ENCODE measurements at regions of chr13 and their contacts with region 1.

Region 1: DNA sequence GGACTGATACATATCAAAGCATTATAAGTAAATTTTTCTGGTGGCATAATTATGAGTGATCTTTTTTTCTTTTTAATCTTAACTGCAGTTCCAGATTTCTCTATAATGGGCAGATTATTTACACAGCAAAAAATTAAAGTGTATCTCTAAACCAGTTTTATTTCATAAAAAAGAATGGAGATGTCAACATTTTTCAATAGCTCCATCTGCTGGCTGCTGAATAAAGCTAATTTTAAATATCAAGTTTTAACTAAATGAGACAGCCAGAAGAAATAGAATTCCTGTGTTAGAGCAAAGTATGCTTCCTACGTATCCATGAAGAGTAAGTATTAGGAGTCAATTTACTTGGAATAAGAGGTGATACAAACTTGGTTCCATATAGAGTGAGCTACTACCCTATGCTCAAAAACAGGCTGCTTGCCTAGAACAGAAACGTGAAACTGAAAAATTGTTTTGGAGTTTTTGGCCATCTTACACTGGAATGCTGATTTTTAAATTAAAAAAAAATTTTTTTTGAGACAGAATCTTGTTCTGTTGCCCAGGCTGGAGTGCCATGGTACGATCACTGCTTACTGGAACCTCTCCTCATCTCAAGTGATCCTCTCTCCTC is 5.0 kb upstream of the PDS5B start:
- DNase-seq: no peak
- H3K4me3 Mint-ChIP-seq: no peak overlapping the region
- H3K27ac Mint-ChIP-seq: no peak overlapping the region
- H3K4me1 Mint-ChIP-seq: peaks cover 8% of the 10 kb centered on the region
- H3K27me3 Mint-ChIP-seq: no peaks in the 10 kb centered on the region

Region 2: GRCh38 chr13:31154939-31155338 is 1426.3 kb before region 1 on chr13:
- CTCF ChIA-PET with region 1: no interaction called
- POLR2A ChIA-PET with region 1: no interaction called
- intact Hi-C with region 1: no loop called
- DNase-seq: no peak
- H3K4me3 Mint-ChIP-seq: no peak overlapping the region
- H3K27ac Mint-ChIP-seq: no peak overlapping the region
- H3K4me1 Mint-ChIP-seq: peaks cover 30% of the 10 kb centered on the region
- H3K27me3 Mint-ChIP-seq: no peaks in the 10 kb centered on the region

Region 3: DNA sequence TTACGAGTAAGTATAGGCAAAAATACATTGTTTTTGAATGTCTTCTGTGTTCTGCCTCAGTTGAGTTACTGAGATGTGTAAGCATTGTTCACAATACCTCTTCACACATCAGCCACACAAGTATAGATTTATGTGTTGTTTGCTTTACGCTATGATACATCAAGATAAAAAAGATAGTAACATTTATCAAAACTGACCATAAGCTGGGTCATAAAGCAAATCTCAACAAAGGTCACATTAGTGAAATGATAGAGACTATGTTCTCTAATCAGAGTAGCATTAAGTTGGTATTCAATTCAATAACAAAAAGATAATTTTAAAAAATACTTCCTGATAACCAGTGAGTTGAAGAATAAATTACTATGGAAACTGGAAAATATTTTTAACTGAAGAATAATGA is 393.6 kb before region 1 on chr13:
- CTCF ChIA-PET with region 1: no interaction called
- POLR2A ChIA-PET with region 1: no interaction called
- intact Hi-C with region 1: no loop called
- DNase-seq: no peak
- H3K4me3 Mint-ChIP-seq: no peak overlapping the region
- H3K27ac Mint-ChIP-seq: no peak overlapping the region
- H3K4me1 Mint-ChIP-seq: no peaks in the 10 kb centered on the region
- H3K27me3 Mint-ChIP-seq: no peaks in the 10 kb centered on the region

Region 4: GRCh38 chr13:32381539-32381938 is 199.7 kb before region 1 on chr13:
- CTCF ChIA-PET with region 1: interaction called, 26 read pairs
- POLR2A ChIA-PET with region 1: no interaction called
- intact Hi-C with region 1: loop called (anchors 1 kb)
- DNase-seq: peak; percentile 11
- H3K4me3 Mint-ChIP-seq: no peak overlapping the region
- H3K27ac Mint-ChIP-seq: no peak overlapping the region
- H3K4me1 Mint-ChIP-seq: no peaks in the 10 kb centered on the region
- H3K27me3 Mint-ChIP-seq: no peaks in the 10 kb centered on the region

Region 5: GRCh38 chr13:32472194-32472621 is 109.1 kb before region 1 on chr13:
- CTCF ChIA-PET with region 1: interaction called, 34 read pairs
- POLR2A ChIA-PET with region 1: no interaction called
- intact Hi-C with region 1: loop called (anchors 1 kb)
- DNase-seq: no peak
- H3K4me3 Mint-ChIP-seq: no peak overlapping the region
- H3K27ac Mint-ChIP-seq: peak overlapping the region; percentile 84
- H3K4me1 Mint-ChIP-seq: peaks cover 18% of the 10 kb centered on the region
- H3K27me3 Mint-ChIP-seq: no peaks in the 10 kb centered on the region

Region 6: GRCh38 chr13:32669030-32669646 is 87.9 kb after region 1 on chr13:
- CTCF ChIA-PET with region 1: interaction called, 42 read pairs
- POLR2A ChIA-PET with region 1: interaction called, 4 read pairs
- intact Hi-C with region 1: loop called (anchors 1 kb)
- DNase-seq: no peak
- H3K4me3 Mint-ChIP-seq: no peak overlapping the region
- H3K27ac Mint-ChIP-seq: no peak overlapping the region
- H3K4me1 Mint-ChIP-seq: no peaks in the 10 kb centered on the region
- H3K27me3 Mint-ChIP-seq: no peaks in the 10 kb centered on the region